ENCODE measurements at regions of chr9 and their contacts with region 1.

Region 1: GRCh38 chr9:111759762-111760639 is 34.7 kb downstream of the SHOC1 start:
- DNase-seq: peak; percentile 57
- CTCF ChIP-seq: peak; percentile 68

Region 2: GRCh38 chr9:111896353-111896958 is 136.5 kb after region 1 on chr9 and contains the start of gene UGCG:
- in situ Hi-C with region 1: loop called (anchors 10 kb)
- DNase-seq: peak; percentile 97
- CTCF ChIP-seq: no peak

Region 3: DNA sequence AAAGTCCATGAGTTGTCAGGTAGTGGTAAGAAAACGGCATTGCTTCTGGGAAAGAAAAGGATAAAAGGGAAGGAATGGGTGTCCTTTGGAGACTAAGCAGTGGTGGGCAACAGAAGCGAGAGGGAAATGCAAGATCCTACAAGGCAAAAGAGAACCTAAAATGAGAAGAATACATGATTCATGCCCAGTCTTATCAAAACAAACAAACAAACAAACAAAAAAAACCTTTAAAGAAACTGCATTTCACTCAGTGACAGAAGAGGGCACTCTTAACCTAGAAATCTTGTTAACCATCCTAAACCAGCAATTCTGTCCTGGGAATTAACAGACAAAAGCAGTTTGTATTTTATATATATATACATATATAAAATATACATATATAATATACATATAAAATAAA is 326.6 kb after region 1 on chr9:
- in situ Hi-C with region 1: loop called (anchors 5 kb)
- DNase-seq: no peak
- CTCF ChIP-seq: peak; percentile 35

Region 4: DNA sequence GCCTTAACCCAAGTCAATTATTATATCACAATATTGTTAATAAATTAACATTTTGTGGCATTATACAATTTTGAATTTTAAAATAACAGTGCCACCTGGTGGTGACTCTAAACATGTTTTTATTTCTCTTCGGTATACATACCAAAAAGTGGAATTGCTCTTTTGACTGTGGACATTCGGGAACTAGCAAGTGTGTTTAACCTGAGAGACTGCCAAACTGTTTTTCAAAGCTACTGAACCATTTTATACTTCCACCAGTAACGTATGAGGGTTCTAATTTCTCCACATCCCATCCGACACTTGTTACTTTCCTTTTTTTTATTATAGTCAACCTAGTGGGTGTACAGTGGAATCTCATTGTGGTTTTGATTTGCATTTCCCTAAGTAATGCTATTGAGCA is 601.6 kb after region 1 on chr9:
- in situ Hi-C with region 1: loop called (anchors 10 kb)
- DNase-seq: peak; percentile 34
- CTCF ChIP-seq: no peak

Measured in GM13976 (cell line).